Activated CD4-positive, alpha-beta T cell treated with anti-CD3 and anti-CD28 coated beads for 36 hours (primary cell): ENCODE measurements at regions of chr19 and their contacts with region 1.

Region 1: DNA sequence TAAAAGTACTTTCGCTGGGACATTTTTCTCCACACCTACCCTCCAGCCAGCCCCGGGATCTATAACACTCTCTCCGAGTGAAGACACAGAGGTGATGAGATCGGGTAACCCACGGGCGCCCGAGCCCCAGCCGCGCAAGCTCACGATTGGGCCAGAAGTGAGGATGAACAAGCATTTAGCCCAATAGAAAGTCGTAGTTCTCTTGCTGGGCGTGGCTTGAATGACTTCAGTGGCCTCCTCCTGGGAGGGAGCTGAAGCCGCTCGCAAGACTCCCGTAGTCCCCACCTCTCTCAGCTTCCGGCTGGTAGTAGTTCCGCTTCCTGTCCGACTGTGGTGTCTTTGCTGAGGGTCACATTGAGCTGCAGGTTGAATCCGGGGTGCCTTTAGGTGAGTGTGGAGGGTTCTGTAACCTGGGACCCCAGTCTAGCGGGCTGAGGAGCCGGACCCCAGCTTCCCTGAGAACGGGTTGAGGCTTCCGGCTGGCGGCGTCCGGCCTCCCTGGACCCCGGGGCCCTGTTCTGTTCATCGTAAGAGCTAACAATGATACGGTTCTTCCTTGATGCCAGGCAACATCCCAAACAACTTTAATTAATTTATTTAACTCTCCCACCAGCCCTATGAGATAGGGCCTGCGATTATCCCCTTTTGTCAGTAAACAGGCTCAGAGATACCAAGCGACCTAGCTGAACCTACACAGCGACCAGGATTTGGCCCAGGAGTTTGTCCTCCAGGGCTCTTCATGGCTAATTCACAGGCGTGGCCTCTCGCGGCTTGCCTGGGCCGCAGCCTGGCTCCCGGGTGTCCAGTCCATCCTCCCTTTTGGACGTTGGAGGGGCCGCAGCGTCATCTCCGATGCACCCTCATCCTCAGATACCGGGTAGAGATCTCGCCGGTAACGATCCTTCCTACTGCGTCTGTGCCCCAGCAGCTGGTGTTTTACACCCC is at the start of gene COX6B1:
- DNase-seq: peak; percentile 95
- ATAC-seq: peak; percentile 76
- H3K4me3 Mint-ChIP-seq: peak within 1 kb of the TSS; percentile 92
- H3K27ac Mint-ChIP-seq: peak within 1 kb of the TSS; percentile 84
- H3K4me1 Mint-ChIP-seq: peaks cover 39% of the 10 kb centered on the region
- H3K27me3 Mint-ChIP-seq: no peaks in the 10 kb centered on the region
- total RNA-seq, gene COX6B1: 385 to 437 TPM

Region 2: GRCh38 chr19:35154525-35155406 is 493.5 kb before region 1 on chr19 and contains the start of gene FXYD5:
- CTCF ChIA-PET with region 1: no interaction called
- POLR2A ChIA-PET with region 1: no interaction called
- intact Hi-C with region 1: loop called in 1 of 2 experiments (anchors 10 kb)
- DNase-seq: peak; percentile 93
- ATAC-seq: peak; percentile 81
- H3K4me3 Mint-ChIP-seq: peak within 1 kb of the TSS; percentile 96
- H3K27ac Mint-ChIP-seq: peak within 1 kb of the TSS; percentile 99
- H3K4me1 Mint-ChIP-seq: peaks cover 52% of the 10 kb centered on the region
- H3K27me3 Mint-ChIP-seq: no peaks in the 10 kb centered on the region
- total RNA-seq, gene FXYD5: 261 to 358 TPM

Region 3: DNA sequence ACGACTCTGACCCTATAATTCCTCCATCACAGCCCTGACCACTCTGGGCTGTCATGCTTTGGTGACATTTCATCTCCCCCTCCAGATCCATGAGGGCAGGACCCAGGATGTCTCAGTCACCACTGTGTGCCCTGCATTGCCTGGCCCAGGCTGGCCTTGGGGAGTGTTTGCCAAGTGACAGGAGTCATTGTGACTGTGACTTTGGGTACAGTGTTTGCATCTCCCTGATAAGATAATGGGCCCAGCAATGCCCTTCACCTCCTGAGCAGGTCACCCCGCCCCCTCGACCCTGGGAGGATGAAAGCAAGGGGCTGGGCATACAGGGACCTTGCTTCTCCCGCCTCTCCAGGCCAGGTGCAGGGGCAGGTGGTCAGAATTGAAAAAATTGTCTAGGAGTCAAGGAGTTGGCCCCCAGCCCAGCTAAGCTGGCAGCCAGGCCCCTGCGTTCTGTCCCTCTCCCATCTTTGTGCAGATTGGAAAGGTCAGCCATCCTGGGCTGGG is 79.0 kb before region 1 on chr19:
- CTCF ChIA-PET with region 1: no interaction called
- POLR2A ChIA-PET with region 1: no interaction called
- intact Hi-C with region 1: no loop called
- DNase-seq: no peak
- ATAC-seq: no peak
- H3K4me3 Mint-ChIP-seq: no peak overlapping the region
- H3K27ac Mint-ChIP-seq: no peak overlapping the region
- H3K4me1 Mint-ChIP-seq: no peaks in the 10 kb centered on the region
- H3K27me3 Mint-ChIP-seq: peaks cover 25% of the 10 kb centered on the region

Region 4: DNA sequence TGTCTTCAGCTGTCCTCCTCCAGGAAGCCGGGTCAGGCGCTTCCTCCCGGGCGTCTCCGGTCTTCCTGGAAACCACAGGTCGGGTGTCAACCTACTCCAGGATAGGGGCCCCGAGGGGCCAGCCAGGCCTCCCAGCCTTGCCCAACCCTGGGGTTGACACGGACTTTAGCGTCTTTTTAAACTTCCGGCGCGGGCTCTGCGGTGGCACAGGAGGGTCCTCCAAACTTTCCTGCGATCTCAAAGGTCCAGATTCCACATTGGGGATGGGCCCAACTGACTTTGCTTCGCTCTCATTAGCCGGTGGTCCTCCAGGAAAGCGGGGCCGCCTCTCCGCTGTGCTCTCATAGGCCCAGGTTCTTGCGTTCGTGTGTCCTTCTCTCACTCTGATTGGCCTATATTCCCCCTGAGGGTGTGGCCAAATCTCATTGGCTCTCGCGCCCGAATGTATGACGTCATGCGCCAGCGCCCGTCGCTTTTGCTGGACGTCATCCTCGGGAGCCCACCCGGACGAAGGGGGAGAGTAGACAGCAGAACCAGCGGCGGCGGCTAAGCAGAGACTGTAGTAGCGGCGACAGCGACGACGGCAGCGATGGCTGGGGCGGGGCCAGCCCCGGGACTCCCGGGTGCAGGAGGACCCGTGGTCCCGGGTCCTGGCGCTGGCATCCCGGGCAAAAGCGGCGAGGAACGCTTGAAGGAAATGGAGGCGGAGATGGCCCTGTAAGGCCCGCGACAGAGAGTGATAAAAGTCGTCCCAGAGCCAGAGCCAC is 19.5 kb before region 1 on chr19 and contains the start of gene RBM42:
- CTCF ChIA-PET with region 1: no interaction called
- POLR2A ChIA-PET with region 1: no interaction called
- intact Hi-C with region 1: loop called (anchors 1 kb)
- DNase-seq: peak; percentile 97
- ATAC-seq: peak; percentile 100
- H3K4me3 Mint-ChIP-seq: peak within 1 kb of the TSS; percentile 98
- H3K27ac Mint-ChIP-seq: peak within 1 kb of the TSS; percentile 98
- H3K4me1 Mint-ChIP-seq: peaks cover 12% of the 10 kb centered on the region
- H3K27me3 Mint-ChIP-seq: no peaks in the 10 kb centered on the region
- total RNA-seq, gene RBM42: 87.5 to 94.4 TPM

Region 5: GRCh38 chr19:35740423-35741202 is 92.3 kb after region 1 on chr19:
- CTCF ChIA-PET with region 1: no interaction called
- POLR2A ChIA-PET with region 1: interaction called, 3 read pairs
- intact Hi-C with region 1: loop called (anchors 1 to 5 kb)
- DNase-seq: peak; percentile 99
- ATAC-seq: peak; percentile 67
- H3K4me3 Mint-ChIP-seq: peak overlapping the region; percentile 82
- H3K27ac Mint-ChIP-seq: peak overlapping the region; percentile 96
- H3K4me1 Mint-ChIP-seq: peaks cover 28% of the 10 kb centered on the region
- H3K27me3 Mint-ChIP-seq: no peaks in the 10 kb centered on the region

Region 6: DNA sequence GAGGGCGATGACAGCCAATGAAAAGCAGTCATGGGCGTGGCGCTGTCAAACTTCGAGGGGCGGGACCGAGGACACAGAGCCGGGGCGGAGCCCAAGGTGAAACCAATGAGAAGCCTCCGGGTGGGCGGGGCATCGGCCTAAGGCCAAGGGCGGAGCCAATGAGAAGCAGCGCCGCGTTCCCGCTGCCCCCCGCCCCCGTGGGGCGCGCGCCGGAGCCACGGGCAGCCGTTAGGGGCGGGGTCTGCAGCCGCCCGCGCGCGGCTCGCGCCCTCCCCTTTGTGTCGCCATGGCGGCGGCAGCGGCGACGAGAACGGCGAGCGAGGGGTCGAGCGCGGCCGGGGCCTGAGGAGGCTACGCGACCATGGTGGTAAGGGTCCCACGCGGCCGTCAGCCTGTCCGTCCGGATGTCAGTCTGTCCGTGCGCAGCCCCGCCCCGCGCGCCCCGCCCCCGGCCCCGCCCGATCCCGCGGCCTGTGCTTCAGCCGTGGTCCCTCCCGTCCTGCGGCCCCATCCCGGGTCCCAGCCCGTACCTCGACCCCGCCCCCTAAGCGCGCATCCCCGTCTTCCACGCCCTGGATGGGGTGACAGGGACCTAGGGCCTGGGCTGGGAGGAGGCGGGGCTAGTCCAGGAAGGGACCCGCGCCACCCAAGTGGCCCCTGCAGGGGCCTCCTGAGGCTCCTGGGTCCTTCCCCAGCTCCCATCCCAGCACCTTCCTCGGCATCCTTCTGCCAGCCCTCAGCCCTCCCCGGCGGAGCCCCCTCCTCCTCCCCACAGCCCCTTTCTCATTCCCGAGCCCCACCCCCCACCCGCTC is 127.2 kb after region 1 on chr19 and contains the start of gene ARHGAP33:
- CTCF ChIA-PET with region 1: no interaction called
- POLR2A ChIA-PET with region 1: no interaction called
- intact Hi-C with region 1: loop called in 1 of 2 experiments (anchors 1 kb)
- DNase-seq: peak; percentile 100
- ATAC-seq: peak; percentile 98
- H3K4me3 Mint-ChIP-seq: peak within 1 kb of the TSS; percentile 75
- H3K27ac Mint-ChIP-seq: no peak within 1 kb of the TSS
- H3K4me1 Mint-ChIP-seq: peaks cover 12% of the 10 kb centered on the region
- H3K27me3 Mint-ChIP-seq: no peaks in the 10 kb centered on the region
- total RNA-seq, gene ARHGAP33: 27.8 to 35.2 TPM

Region 7: GRCh38 chr19:36139473-36140303 is 491.4 kb after region 1 on chr19 and contains the start of gene CAPNS1:
- CTCF ChIA-PET with region 1: no interaction called
- POLR2A ChIA-PET with region 1: no interaction called
- intact Hi-C with region 1: loop called in 1 of 2 experiments (anchors 1 kb)
- DNase-seq: peak; percentile 96
- ATAC-seq: peak; percentile 74
- H3K4me3 Mint-ChIP-seq: peak within 1 kb of the TSS; percentile 97
- H3K27ac Mint-ChIP-seq: peak within 1 kb of the TSS; percentile 97
- H3K4me1 Mint-ChIP-seq: peaks cover 26% of the 10 kb centered on the region
- H3K27me3 Mint-ChIP-seq: no peaks in the 10 kb centered on the region
- total RNA-seq, gene CAPNS1: 345 to 452 TPM